ENCODE measurements at regions of chr7 and their contacts with region 1.

Region 1: GRCh38 chr7:111486472-111487142 is 75.7 kb downstream of the IMMP2L start:
- DNase-seq: peak in 2 of 9 experiments; percentile 39 to 54
- ATAC-seq: no peak
- H3K4me3 ChIP-seq: no peak overlapping the region
- H3K4me3 Mint-ChIP-seq: no peak overlapping the region
- H3K27ac ChIP-seq: no peak overlapping the region
- H3K27ac Mint-ChIP-seq: no peak overlapping the region
- H3K4me1 ChIP-seq: no peaks in the 10 kb centered on the region
- H3K4me1 Mint-ChIP-seq: no peaks in the 10 kb centered on the region
- H3K27me3 ChIP-seq: no peaks in the 10 kb centered on the region
- H3K27me3 Mint-ChIP-seq: no peaks in the 10 kb centered on the region
- CTCF ChIP-seq: peak; percentile 75

Region 2: GRCh38 chr7:109844362-109844761 is 1642.2 kb before region 1 on chr7:
- CTCF ChIA-PET with region 1: no interaction called
- POLR2A ChIA-PET with region 1: no interaction called
- intact Hi-C with region 1: loop called in 1 of 2 experiments (anchors 2 kb)
- DNase-seq: peak in 2 of 9 experiments; percentile 4 to 40
- ATAC-seq: no peak
- H3K4me3 ChIP-seq: no peak overlapping the region
- H3K4me3 Mint-ChIP-seq: no peak overlapping the region
- H3K27ac ChIP-seq: no peak overlapping the region
- H3K27ac Mint-ChIP-seq: no peak overlapping the region
- H3K4me1 ChIP-seq: no peaks in the 10 kb centered on the region
- H3K4me1 Mint-ChIP-seq: no peaks in the 10 kb centered on the region
- H3K27me3 ChIP-seq: no peaks in the 10 kb centered on the region
- H3K27me3 Mint-ChIP-seq: no peaks in the 10 kb centered on the region
- CTCF ChIP-seq: peak; percentile 22

Region 3: GRCh38 chr7:110090110-110090769 is 1396.4 kb before region 1 on chr7:
- CTCF ChIA-PET with region 1: no interaction called
- POLR2A ChIA-PET with region 1: no interaction called
- intact Hi-C with region 1: loop called in 1 of 2 experiments (anchors 5 kb)
- DNase-seq: peak in 2 of 9 experiments; percentile 9 to 33
- ATAC-seq: no peak
- H3K4me3 ChIP-seq: no peak overlapping the region
- H3K4me3 Mint-ChIP-seq: no peak overlapping the region
- H3K27ac ChIP-seq: no peak overlapping the region
- H3K27ac Mint-ChIP-seq: no peak overlapping the region
- H3K4me1 ChIP-seq: no peaks in the 10 kb centered on the region
- H3K4me1 Mint-ChIP-seq: no peaks in the 10 kb centered on the region
- H3K27me3 ChIP-seq: no peaks in the 10 kb centered on the region
- H3K27me3 Mint-ChIP-seq: no peaks in the 10 kb centered on the region
- CTCF ChIP-seq: peak; percentile 11

Region 4: GRCh38 chr7:110590415-110590814 is 896.2 kb before region 1 on chr7:
- CTCF ChIA-PET with region 1: no interaction called
- POLR2A ChIA-PET with region 1: no interaction called
- intact Hi-C with region 1: loop called (anchors 1 to 5 kb)
- DNase-seq: peak in 3 of 9 experiments; percentile 16 to 25 (median 17)
- ATAC-seq: no peak
- H3K4me3 ChIP-seq: no peak overlapping the region
- H3K4me3 Mint-ChIP-seq: no peak overlapping the region
- H3K27ac ChIP-seq: no peak overlapping the region
- H3K27ac Mint-ChIP-seq: no peak overlapping the region
- H3K4me1 ChIP-seq: no peaks in the 10 kb centered on the region
- H3K4me1 Mint-ChIP-seq: no peaks in the 10 kb centered on the region
- H3K27me3 ChIP-seq: no peaks in the 10 kb centered on the region
- H3K27me3 Mint-ChIP-seq: no peaks in the 10 kb centered on the region
- CTCF ChIP-seq: no peak

Region 5: DNA sequence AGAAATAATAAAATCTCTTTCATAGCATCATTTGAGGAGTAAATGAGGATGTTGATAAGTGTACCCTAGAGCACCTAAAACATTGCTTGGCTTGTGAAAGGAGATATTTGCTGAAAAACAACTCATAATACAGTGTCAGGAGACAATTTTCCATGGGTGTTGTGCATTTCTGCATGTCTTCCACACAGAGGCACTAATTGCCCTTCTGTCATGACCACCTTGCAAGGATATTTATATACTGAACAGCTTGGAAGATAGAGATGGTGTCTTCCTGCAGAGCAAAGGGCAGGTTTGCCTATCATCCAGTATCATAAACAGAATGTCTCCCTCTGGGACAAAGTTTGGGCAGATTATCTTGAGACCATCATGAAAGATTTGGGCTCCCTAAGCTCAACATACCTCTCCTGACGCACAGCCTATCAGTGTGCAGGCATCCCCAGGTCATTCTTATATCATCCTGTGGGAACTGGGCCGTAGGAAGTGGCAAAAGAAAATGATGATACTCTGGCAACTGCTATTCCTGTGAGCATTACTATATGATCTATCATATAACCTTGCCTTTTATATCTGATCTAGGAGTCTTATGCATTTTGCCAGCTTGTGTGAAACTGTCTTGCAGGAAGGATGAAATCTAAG is 890.8 kb before region 1 on chr7:
- CTCF ChIA-PET with region 1: no interaction called
- POLR2A ChIA-PET with region 1: no interaction called
- intact Hi-C with region 1: loop called (anchors 1 to 5 kb)
- DNase-seq: peak in 2 of 9 experiments; percentile 13 to 38
- ATAC-seq: no peak
- H3K4me3 ChIP-seq: no peak overlapping the region
- H3K4me3 Mint-ChIP-seq: no peak overlapping the region
- H3K27ac ChIP-seq: no peak overlapping the region
- H3K27ac Mint-ChIP-seq: no peak overlapping the region
- H3K4me1 ChIP-seq: no peaks in the 10 kb centered on the region
- H3K4me1 Mint-ChIP-seq: no peaks in the 10 kb centered on the region
- H3K27me3 ChIP-seq: no peaks in the 10 kb centered on the region
- H3K27me3 Mint-ChIP-seq: no peaks in the 10 kb centered on the region
- CTCF ChIP-seq: no peak

Region 6: GRCh38 chr7:111266613-111267012 is 220.0 kb before region 1 on chr7:
- CTCF ChIA-PET with region 1: no interaction called
- POLR2A ChIA-PET with region 1: no interaction called
- intact Hi-C with region 1: no loop called
- DNase-seq: no peak
- ATAC-seq: no peak
- H3K4me3 ChIP-seq: no peak overlapping the region
- H3K4me3 Mint-ChIP-seq: no peak overlapping the region
- H3K27ac ChIP-seq: no peak overlapping the region
- H3K27ac Mint-ChIP-seq: no peak overlapping the region
- H3K4me1 ChIP-seq: no peaks in the 10 kb centered on the region
- H3K4me1 Mint-ChIP-seq: no peaks in the 10 kb centered on the region
- H3K27me3 ChIP-seq: no peaks in the 10 kb centered on the region
- H3K27me3 Mint-ChIP-seq: no peaks in the 10 kb centered on the region
- CTCF ChIP-seq: no peak

Region 7: GRCh38 chr7:111735661-111736551 is 249.3 kb after region 1 on chr7:
- CTCF ChIA-PET with region 1: no interaction called
- POLR2A ChIA-PET with region 1: no interaction called
- intact Hi-C with region 1: loop called (anchors 2 to 5 kb)
- DNase-seq: peak in 8 of 9 experiments; percentile 8 to 70 (median 56)
- ATAC-seq: peak; percentile 54
- H3K4me3 ChIP-seq: no peak overlapping the region
- H3K4me3 Mint-ChIP-seq: no peak overlapping the region
- H3K27ac ChIP-seq: no peak overlapping the region
- H3K27ac Mint-ChIP-seq: no peak overlapping the region
- H3K4me1 ChIP-seq: no peaks in the 10 kb centered on the region
- H3K4me1 Mint-ChIP-seq: no peaks in the 10 kb centered on the region
- H3K27me3 ChIP-seq: no peaks in the 10 kb centered on the region
- H3K27me3 Mint-ChIP-seq: peaks cover 5% of the 10 kb centered on the region
- CTCF ChIP-seq: peak; percentile 93

Measured in CD8-positive, alpha-beta T cell (primary cell).